MCF 10A (cell line): ENCODE measurements at regions of chr22 and their contacts with region 1.

Region 1: GRCh38 chr22:37623075-37624016 is 14.7 kb downstream of the GGA1 start:
- DNase-seq: peak; percentile 63
- H3K4me3 Mint-ChIP-seq: no peak overlapping the region
- H3K27ac Mint-ChIP-seq: no peak overlapping the region
- H3K4me1 Mint-ChIP-seq: no peaks in the 10 kb centered on the region
- H3K27me3 Mint-ChIP-seq: no peaks in the 10 kb centered on the region
- CTCF ChIP-seq: peak; percentile 70

Region 2: GRCh38 chr22:37676736-37677492 is 53.6 kb after region 1 on chr22:
- CTCF ChIA-PET with region 1: interaction called, 3 read pairs
- POLR2A ChIA-PET with region 1: no interaction called
- intact Hi-C with region 1: loop called (anchors 1 kb)
- DNase-seq: peak; percentile 94
- H3K4me3 Mint-ChIP-seq: peak overlapping the region; percentile 75
- H3K27ac Mint-ChIP-seq: peak overlapping the region; percentile 66
- H3K4me1 Mint-ChIP-seq: peaks cover 25% of the 10 kb centered on the region
- H3K27me3 Mint-ChIP-seq: no peaks in the 10 kb centered on the region
- CTCF ChIP-seq: no peak